ENCODE measurements at regions of chr10 and their contacts with region 1.

Region 1: DNA sequence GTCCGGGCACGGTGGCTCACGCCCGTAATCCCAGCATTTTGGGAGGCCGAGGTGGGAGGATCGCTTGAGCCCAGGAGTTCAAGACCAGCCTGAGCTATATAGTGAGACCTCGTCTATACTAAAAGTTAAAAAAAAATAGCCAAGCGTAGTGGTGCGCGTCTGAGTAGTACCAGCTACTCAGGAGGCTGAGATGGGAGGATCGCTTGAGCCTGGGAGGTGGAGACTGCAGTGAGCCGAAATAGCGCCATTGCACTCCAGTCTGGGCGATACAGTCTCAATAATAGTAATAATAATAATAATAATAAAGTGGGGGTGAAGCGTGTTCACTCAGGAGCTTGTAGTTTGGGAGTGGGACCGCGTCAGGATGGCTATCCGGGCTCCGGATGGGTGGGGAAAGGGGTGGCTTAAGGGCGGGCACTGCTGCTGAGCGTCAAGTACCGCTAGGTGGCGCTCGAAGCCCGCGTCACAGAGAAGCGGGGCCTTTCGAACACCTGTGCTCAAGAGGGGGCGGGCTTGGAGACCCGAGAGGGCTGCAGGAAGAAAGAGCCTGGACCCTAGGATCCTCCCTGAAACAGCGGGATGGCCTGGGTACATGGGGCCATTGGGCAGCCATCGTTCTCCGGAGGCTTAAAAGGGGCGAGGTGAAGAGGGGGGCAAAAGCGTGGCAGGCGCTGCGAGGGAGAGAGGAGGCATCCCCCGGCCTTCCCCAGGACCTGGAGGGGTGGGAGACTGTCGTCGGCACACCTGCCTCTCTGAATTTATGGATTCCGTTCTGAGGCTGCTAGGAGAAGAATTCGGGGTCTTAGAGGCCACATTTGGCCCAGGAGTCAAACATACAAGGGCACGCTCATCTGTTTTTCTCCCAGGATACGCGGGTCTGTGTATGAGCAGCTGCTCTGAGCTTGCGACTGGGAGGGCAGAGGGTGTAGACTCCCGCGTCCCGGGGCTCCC is 14.5 kb downstream of the LBX1 start:
- DNase-seq: peak; percentile 66 to 74
- ATAC-seq: peak; percentile 69 to 86
- H3K4me3 ChIP-seq: peak overlapping the region; percentile 40
- H3K27ac ChIP-seq: no peak overlapping the region
- H3K4me1 ChIP-seq: no peaks in the 10 kb centered on the region
- CTCF ChIP-seq: peak; percentile 93
- EP300 ChIP-seq: no peak
- POLR2A ChIP-seq: no peak
- RAD21 ChIP-seq: peak; percentile 91 to 93

Region 2: DNA sequence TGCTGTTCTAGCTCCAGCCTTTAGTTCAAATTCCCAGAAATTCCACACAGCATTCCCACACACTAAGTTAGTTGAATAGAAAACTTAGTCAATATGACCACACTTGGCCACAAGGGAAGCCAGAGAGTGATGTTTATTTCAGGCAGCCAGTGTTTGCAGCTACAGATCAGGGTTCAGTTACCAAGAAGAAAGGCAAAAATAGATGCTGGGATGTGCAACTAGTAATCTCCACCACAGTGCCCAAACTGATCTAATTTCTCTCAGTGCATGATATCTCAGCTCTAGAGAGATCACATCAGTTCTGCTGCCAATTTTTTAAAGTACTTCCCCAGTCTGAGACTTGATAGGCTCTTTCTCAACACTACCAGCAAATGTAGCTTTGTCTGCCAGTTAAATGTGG is 284.4 kb before region 1 on chr10:
- CTCF ChIA-PET with region 1: no interaction called
- POLR2A ChIA-PET with region 1: no interaction called
- DNase-seq: peak; percentile 10 to 12
- ATAC-seq: peak; percentile 71 to 81
- H3K4me3 ChIP-seq: no peak overlapping the region
- H3K27ac ChIP-seq: no peak overlapping the region
- H3K4me1 ChIP-seq: no peaks in the 10 kb centered on the region
- CTCF ChIP-seq: no peak
- EP300 ChIP-seq: no peak
- POLR2A ChIP-seq: no peak
- RAD21 ChIP-seq: no peak

Region 3: GRCh38 chr10:101195921-101196320 is 18.8 kb before region 1 on chr10:
- CTCF ChIA-PET with region 1: interaction called, 24 read pairs
- POLR2A ChIA-PET with region 1: no interaction called
- DNase-seq: no peak
- ATAC-seq: no peak
- H3K4me3 ChIP-seq: no peak overlapping the region
- H3K27ac ChIP-seq: no peak overlapping the region
- H3K4me1 ChIP-seq: no peaks in the 10 kb centered on the region
- CTCF ChIP-seq: no peak
- EP300 ChIP-seq: no peak
- POLR2A ChIP-seq: no peak
- RAD21 ChIP-seq: no peak

Region 4: GRCh38 chr10:101258179-101258885 is 43.6 kb after region 1 on chr10:
- CTCF ChIA-PET with region 1: interaction called, 206 read pairs
- POLR2A ChIA-PET with region 1: no interaction called
- DNase-seq: peak in 1 of 2 experiments; percentile 27
- ATAC-seq: no peak
- H3K4me3 ChIP-seq: no peak overlapping the region
- H3K27ac ChIP-seq: no peak overlapping the region
- H3K4me1 ChIP-seq: no peaks in the 10 kb centered on the region
- CTCF ChIP-seq: no peak
- EP300 ChIP-seq: no peak
- POLR2A ChIP-seq: no peak
- RAD21 ChIP-seq: no peak

Region 5: DNA sequence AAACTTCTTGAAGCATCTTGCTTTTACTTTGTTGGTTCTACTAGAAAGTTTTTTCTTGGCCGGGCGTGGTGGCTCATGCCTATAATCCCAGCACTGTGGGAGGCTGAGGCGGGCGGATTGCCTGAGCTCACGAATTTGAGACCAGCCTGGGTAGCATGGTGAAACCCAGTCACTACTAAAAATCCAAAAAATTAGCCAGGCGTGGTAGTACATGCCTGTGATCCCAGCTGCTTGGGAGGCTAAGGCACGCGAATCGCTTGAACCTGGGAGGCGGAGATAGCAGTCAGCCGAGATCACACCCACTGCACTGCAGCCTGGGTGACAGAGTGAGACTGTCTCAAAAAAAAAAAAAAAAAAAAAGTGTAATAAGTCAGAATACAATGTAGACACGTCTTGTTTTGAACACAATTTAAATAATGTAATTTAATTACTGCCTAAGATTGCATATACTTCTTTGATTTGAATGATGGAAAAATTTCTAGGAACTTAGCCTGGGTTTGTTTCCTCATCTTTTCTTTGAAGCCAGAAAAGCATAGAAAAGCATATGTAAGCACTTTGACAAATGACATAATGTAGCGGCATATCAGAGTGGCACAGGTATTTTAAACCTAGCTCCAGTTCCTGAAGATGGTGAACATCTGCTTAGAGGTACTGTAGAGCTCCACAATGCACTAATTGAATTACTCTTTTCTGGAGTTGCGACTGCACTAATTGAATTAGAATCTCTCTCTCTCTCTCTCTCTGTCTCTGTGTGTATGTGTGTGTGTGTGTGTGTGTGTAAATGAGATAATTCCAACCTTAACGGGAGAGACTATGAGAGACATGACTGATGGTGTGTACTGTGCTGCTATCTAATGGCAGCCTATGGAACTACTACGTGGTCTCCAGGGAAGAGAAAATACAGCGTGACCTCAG is 227.1 kb after region 1 on chr10:
- CTCF ChIA-PET with region 1: interaction called, 135 read pairs
- POLR2A ChIA-PET with region 1: no interaction called
- DNase-seq: peak; percentile 62 to 83
- ATAC-seq: peak; percentile 98 to 99
- H3K4me3 ChIP-seq: no peak overlapping the region
- H3K27ac ChIP-seq: no peak overlapping the region
- H3K4me1 ChIP-seq: peaks cover 5% of the 10 kb centered on the region; the same call in 1 of the 3 replicates
- CTCF ChIP-seq: peak; percentile 83
- EP300 ChIP-seq: no peak
- POLR2A ChIP-seq: no peak
- RAD21 ChIP-seq: peak; percentile 86 to 89

Region 6: GRCh38 chr10:101536800-101537199 is 322.1 kb after region 1 on chr10:
- CTCF ChIA-PET with region 1: interaction called, 21 read pairs
- POLR2A ChIA-PET with region 1: no interaction called
- DNase-seq: peak; percentile 49 to 58
- ATAC-seq: peak; percentile 50 to 66; a peak in 3 of 6 replicates
- H3K4me3 ChIP-seq: no peak overlapping the region
- H3K27ac ChIP-seq: no peak overlapping the region
- H3K4me1 ChIP-seq: no peaks in the 10 kb centered on the region
- CTCF ChIP-seq: peak; percentile 73
- EP300 ChIP-seq: no peak
- POLR2A ChIP-seq: no peak
- RAD21 ChIP-seq: peak in 1 of 2 experiments; percentile 30; a peak in 2 of 5 replicates

Region 7: DNA sequence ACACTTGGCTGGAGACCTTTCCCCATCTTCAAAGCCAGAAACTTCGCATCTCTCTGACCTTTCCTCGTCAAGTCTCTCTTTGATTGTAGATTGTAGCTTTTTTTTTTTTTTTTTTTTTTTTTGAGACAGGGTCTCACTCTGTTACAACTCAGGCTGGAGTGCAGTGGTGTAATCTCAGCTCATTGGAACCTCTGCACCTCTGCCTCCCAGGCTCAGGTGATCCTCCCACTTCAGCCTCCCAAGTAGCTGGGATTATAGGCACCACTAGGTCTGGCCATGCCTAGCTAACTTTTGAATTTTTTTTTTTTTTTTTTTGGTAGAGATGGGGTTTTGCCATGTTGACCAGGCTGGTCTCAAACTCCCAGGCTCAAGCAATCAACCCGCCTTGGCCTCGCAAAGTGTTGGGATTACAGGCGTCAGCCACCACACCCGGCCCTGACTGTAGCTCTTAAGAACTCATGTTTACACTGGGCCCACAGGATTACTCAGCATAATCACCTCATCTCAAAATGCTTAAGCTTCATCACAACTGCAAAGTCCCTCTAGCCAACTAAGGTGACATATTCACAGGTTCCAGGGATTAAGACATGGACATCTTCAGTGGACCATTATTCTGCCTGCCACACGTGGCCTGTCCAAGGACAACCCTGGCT is 361.6 kb after region 1 on chr10:
- CTCF ChIA-PET with region 1: interaction called, 136 read pairs
- POLR2A ChIA-PET with region 1: interaction called, 9 read pairs
- DNase-seq: peak in 1 of 2 experiments; percentile 58
- ATAC-seq: no peak
- H3K4me3 ChIP-seq: no peak overlapping the region
- H3K27ac ChIP-seq: peak overlapping the region in 1 of 2 experiments; percentile 44; a peak in 1 of 6 replicates
- H3K4me1 ChIP-seq: peaks cover 7% of the 10 kb centered on the region; the same call in 2 of the 3 replicates
- CTCF ChIP-seq: no peak
- EP300 ChIP-seq: no peak
- POLR2A ChIP-seq: no peak
- RAD21 ChIP-seq: no peak

Measured in A549 (cell line).